ENCODE measurements at regions of chr6 and their contacts with region 1.

Region 1: GRCh38 chr6:27332692-27333641 is 20.9 kb upstream of the POM121L2 start:
- DNase-seq: peak in 8 of 9 donors; percentile 18 to 79 (median 68)
- ATAC-seq: peak; percentile 74
- H3K4me3 ChIP-seq: peak overlapping the region; percentile 60
- H3K4me3 Mint-ChIP-seq: peak overlapping the region; percentile 67 to 94 (median 87)
- H3K27ac ChIP-seq: no peak overlapping the region
- H3K27ac Mint-ChIP-seq: peak overlapping the region; percentile 0 to 97 (median 84)
- H3K4me1 ChIP-seq: peaks cover 0 to 3% of the 10 kb centered on the region in 2 donors
- H3K4me1 Mint-ChIP-seq: peaks cover 7 to 21% (median 13%) of the 10 kb centered on the region in 7 donors
- H3K27me3 ChIP-seq: peaks cover 0 to 8% of the 10 kb centered on the region in 2 donors
- H3K27me3 Mint-ChIP-seq: peaks cover 21 to 53% (median 25%) of the 10 kb centered on the region in 5 donors

Region 2: DNA sequence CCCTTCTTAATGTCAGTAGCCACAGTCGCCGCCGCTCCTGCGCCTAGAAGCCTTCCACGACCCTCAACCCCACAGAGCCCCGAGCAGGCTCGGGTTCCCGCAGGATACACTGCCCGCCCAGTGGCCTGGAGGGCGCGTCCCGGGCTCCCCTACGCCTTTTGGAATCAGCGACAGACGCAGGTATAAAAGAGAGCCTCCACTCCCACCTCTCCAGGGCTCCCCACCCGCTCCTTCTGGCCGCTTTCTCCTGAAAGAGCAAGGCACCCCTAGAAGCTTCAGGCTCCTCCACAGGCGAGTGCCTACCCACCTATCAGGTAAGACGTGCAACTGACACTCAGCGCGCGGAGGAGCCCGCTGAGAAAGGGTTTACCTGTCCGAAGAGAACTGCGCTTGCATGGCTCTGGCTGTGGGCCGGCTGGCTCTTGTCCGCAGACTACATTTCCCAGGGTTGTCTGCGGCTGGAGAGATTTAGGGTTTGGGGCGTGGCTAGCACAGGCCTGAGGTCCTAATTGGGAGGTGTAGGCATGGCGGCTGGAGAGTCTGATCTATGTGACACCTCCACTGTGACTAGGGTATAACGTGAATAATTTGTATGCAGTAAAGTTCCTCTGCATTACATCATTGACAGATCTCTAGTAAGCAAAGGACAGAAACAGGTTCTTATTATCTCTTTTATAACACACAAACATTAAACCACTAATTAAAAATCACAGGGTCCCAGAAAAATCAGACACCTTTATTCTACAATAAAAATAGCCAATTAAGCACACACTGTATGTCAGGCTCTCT is 42.1 kb after region 1 on chr6:
- CTCF ChIA-PET with region 1: no interaction called
- POLR2A ChIA-PET with region 1: no interaction called
- intact Hi-C with region 1: loop called in 1 of 2 experiments (anchors 2 kb)
- DNase-seq: peak; percentile 31 to 68 (median 62)
- ATAC-seq: peak; percentile 98
- H3K4me3 ChIP-seq: peak overlapping the region; percentile 81
- H3K4me3 Mint-ChIP-seq: peak overlapping the region; percentile 68 to 94 (median 92)
- H3K27ac ChIP-seq: peak overlapping the region; percentile 68
- H3K27ac Mint-ChIP-seq: peak overlapping the region in 8 of 9 donors; percentile 81 to 93 (median 87)
- H3K4me1 ChIP-seq: peaks cover 13 to 17% of the 10 kb centered on the region in 2 donors
- H3K4me1 Mint-ChIP-seq: peaks cover 16 to 35% (median 28%) of the 10 kb centered on the region in 7 donors
- H3K27me3 ChIP-seq: no peaks in the 10 kb centered on the region
- H3K27me3 Mint-ChIP-seq: peaks cover 0 to 6% (median under 1%) of the 10 kb centered on the region in 5 donors